BJ (cell line): ENCODE measurements at regions of chr2 and their contacts with region 1.

Region 1: GRCh38 chr2:174012347-174013314 is 47.5 kb upstream of the SP3 start:
- DNase-seq: no peak
- H3K4me3 ChIP-seq: peak overlapping the region; percentile 37
- H3K27me3 ChIP-seq: no peaks in the 10 kb centered on the region
- CTCF ChIP-seq: no peak

Region 2: DNA sequence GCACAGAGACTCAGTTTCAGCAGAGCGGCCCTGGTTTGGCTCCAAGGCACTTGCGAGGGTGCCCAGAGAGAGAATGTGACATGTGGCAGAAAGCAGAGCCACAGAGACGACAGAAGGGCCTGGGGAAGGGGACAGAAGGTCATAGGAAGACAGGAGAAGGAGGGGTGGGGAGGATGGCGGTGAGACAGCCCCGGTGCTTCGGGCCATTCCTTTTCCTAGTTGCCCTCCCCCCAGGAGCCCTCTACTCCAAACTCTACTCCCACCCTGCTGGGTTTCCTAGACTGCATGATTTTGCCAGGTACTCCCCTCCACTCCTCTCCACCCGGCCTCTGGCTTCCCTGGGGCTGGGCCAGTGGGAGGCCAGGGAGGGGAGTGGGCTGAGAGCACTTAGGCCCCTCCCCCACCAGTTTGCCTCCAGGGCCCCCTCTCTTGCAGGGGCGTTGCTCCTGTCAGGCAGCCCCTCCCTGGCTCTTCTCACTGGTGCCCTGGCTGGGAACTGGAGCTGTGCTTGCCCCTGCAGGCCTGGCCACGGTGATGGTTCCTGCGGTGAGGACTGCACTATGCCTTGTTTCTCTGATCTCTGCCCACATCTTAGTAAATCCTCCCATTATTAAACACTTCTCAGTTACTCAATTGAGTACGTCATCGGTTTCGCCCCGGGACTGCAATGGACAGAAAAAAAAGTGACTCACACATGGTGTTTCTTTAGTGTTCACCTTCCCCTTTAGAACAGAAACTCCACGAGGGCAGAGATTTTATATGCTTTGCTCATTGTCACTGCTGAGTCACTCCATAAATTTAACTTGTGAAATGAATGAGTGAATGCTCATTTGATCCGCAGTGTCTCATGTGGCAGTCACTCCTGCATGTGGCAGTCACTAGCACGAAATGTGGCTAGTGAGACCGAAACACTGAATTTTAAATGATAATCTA is 11.2 kb after region 1 on chr2:
- CTCF ChIA-PET with region 1: interaction called, 10 read pairs
- POLR2A ChIA-PET with region 1: no interaction called
- DNase-seq: peak; percentile 82
- H3K4me3 ChIP-seq: no peak overlapping the region
- H3K27me3 ChIP-seq: no peaks in the 10 kb centered on the region
- CTCF ChIP-seq: no peak